Activated naive CD4-positive, alpha-beta T cell treated with anti-CD3 and anti-CD28 coated beads, Interleukin-2, amount 10 ng/mL, durations not matched to agents 7 days and 5 days (primary cell): ENCODE measurements at regions of chr2 and their contacts with region 1.

Region 1: GRCh38 chr2:96760036-96760985 is at the start of gene CNNM4:
- DNase-seq: peak; percentile 95
- H3K4me3 Mint-ChIP-seq: peak within 1 kb of the TSS; percentile 79
- H3K27ac Mint-ChIP-seq: peak within 1 kb of the TSS; percentile 80
- H3K4me1 Mint-ChIP-seq: peaks cover 55% of the 10 kb centered on the region
- H3K27me3 Mint-ChIP-seq: peaks cover 8% of the 10 kb centered on the region

Region 2: DNA sequence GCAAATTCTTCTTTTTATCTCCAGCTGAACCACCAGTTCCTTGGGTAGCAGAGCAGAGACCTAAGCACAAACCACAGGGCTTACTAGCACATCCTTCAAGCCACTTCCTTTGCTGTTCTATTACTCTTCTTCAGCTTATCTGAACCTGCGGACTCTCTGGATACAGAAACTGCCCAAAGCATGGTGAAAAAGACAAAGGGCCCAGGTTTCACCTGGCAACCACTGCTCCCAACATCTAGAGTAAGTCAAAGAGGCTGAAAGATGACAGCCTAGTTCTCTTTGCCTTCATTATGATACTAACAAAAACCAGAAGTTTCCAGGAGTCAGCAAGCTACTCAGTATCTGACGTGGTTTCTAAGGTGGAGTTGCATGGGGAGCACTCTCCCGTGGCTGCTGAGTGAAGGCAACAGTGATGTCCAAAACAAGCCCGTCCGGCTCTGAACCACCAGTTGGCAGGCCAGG is 165.6 kb before region 1 on chr2:
- CTCF ChIA-PET with region 1: interaction called, 15 read pairs
- DNase-seq: peak; percentile 41
- H3K4me3 Mint-ChIP-seq: no peak overlapping the region
- H3K27ac Mint-ChIP-seq: peak overlapping the region; percentile 75
- H3K4me1 Mint-ChIP-seq: peaks cover 49% of the 10 kb centered on the region
- H3K27me3 Mint-ChIP-seq: no peaks in the 10 kb centered on the region

Region 3: DNA sequence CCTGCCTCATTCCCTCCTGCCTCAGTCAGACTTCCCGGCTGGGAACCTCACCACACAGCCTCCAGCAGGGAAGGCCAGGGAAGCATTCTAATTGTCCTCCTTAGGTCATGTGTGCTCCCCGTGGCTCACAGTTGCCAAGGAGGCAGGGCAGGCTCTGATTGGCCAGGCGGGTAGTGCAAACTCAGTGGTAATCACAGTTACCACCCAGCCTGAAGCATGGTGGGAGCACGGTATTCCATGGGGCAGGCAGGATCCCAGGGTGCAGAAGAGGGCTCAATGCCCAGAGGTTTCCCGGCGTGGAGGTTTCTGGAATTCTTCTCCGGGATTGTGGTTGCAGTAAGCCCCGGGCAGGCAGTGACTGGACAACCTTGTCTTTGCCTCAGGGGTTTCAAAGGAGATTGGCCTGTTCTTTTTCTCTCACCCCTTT is 90.6 kb before region 1 on chr2:
- CTCF ChIA-PET with region 1: no interaction called
- DNase-seq: no peak
- H3K4me3 Mint-ChIP-seq: no peak overlapping the region
- H3K27ac Mint-ChIP-seq: no peak overlapping the region
- H3K4me1 Mint-ChIP-seq: no peaks in the 10 kb centered on the region
- H3K27me3 Mint-ChIP-seq: peaks cover 38% of the 10 kb centered on the region

Region 4: GRCh38 chr2:96685577-96686459 is 74.5 kb before region 1 on chr2:
- CTCF ChIA-PET with region 1: no interaction called
- DNase-seq: no peak
- H3K4me3 Mint-ChIP-seq: no peak overlapping the region
- H3K27ac Mint-ChIP-seq: no peak overlapping the region
- H3K4me1 Mint-ChIP-seq: no peaks in the 10 kb centered on the region
- H3K27me3 Mint-ChIP-seq: peaks cover 27% of the 10 kb centered on the region

Region 5: DNA sequence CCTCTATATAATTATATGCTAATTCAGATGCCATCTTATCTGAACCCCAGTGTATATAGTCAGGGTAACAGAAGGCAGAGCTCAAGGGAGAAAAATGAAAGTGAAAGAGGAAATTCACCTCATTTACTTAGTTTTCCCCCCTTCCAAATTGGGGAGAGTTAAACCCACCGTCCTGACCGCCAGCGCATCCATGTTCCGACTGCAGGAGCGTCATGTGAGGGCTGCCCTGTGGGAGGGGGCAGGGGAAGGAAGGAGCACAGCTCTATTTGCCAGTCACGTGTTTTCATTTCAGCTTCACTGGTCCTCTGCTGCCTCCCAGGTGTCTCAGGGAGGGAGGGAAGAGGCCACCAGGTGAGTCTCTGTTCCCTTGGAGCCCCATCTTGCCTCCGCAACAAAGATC is 13.6 kb after region 1 on chr2:
- CTCF ChIA-PET with region 1: interaction called, 43 read pairs
- DNase-seq: peak; percentile 77
- H3K4me3 Mint-ChIP-seq: peak overlapping the region; percentile 73
- H3K27ac Mint-ChIP-seq: peak overlapping the region; percentile 90
- H3K4me1 Mint-ChIP-seq: peaks cover 21% of the 10 kb centered on the region
- H3K27me3 Mint-ChIP-seq: no peaks in the 10 kb centered on the region

Region 6: GRCh38 chr2:96801005-96801785 is 40.9 kb after region 1 on chr2:
- CTCF ChIA-PET with region 1: interaction called, 12 read pairs
- DNase-seq: peak; percentile 79
- H3K4me3 Mint-ChIP-seq: no peak overlapping the region
- H3K27ac Mint-ChIP-seq: no peak overlapping the region
- H3K4me1 Mint-ChIP-seq: peaks cover 4% of the 10 kb centered on the region
- H3K27me3 Mint-ChIP-seq: no peaks in the 10 kb centered on the region

Region 7: DNA sequence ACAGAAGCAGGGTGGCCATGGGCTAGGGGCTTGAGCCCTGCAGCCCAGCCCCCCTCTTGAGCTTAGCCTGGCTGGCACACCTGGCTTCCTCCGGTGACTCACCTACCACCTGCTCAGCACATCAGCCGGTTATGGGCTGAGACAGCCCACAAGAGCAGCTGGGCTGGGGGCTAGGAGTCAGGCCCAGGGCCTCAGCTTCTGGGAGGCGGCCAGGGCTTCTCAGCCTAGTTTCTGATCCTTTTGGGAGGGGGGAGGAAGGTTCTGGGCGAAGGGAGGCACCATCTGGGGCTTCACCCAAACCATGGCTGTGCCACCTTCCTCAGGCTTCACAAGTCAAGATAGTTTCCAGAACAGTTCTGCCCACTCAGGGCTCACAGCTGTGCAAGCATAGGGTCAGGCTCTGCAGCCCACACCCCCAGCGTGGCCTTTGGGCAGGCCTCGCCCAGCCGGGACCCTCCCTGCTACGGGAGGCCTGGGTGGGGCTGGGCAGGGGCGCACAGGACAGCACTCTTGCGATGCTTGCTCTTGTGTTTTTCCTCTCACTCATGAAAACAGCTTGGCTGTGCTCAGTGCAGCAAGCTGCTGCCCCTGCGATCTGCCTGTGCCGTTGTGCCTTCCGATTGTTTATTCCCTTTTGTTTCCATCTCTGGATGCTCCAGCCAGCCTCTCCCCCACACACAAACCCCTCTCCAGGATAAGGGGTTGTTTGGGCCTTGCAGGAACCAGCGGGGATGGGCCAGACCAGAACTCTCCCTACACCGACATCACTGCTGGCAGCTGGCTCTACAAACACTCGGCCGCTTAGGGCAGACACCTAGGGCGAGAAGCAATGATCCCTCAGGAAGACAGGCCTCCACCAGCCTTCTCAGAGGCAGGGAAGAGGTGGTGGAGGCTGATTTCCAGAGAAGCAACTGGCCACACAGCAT is 135.7 kb after region 1 on chr2:
- CTCF ChIA-PET with region 1: no interaction called
- DNase-seq: no peak
- H3K4me3 Mint-ChIP-seq: no peak overlapping the region
- H3K27ac Mint-ChIP-seq: no peak overlapping the region
- H3K4me1 Mint-ChIP-seq: peaks cover 50% of the 10 kb centered on the region
- H3K27me3 Mint-ChIP-seq: peaks cover 37% of the 10 kb centered on the region